Mammary epithelial cell (primary cell): ENCODE measurements at regions of chr9 and their contacts with region 1.

Region 1: GRCh38 chr9:114434878-114435311 is 47.1 kb upstream of the AKNA start:
- DNase-seq: peak; percentile 41
- H3K4me3 ChIP-seq: no peak overlapping the region
- H3K27ac ChIP-seq: no peak overlapping the region
- H3K4me1 ChIP-seq: no peaks in the 10 kb centered on the region
- H3K27me3 ChIP-seq: no peaks in the 10 kb centered on the region
- CTCF ChIP-seq: peak; percentile 80 to 84

Region 2: GRCh38 chr9:113361304-113362018 is 1073.4 kb before region 1 on chr9:
- CTCF ChIA-PET with region 1: no interaction called
- dilution Hi-C with region 1: no loop called
- in situ Hi-C with region 1: no loop called
- intact Hi-C with region 1: no loop called
- DNase-seq: no peak
- H3K4me3 ChIP-seq: no peak overlapping the region
- H3K27ac ChIP-seq: no peak overlapping the region
- H3K4me1 ChIP-seq: no peaks in the 10 kb centered on the region
- H3K27me3 ChIP-seq: no peaks in the 10 kb centered on the region
- CTCF ChIP-seq: no peak

Region 3: GRCh38 chr9:114472765-114473446 is 38.0 kb after region 1 on chr9:
- CTCF ChIA-PET with region 1: no interaction called
- dilution Hi-C with region 1: loop called (anchors 5 kb)
- in situ Hi-C with region 1: no loop called
- intact Hi-C with region 1: no loop called
- DNase-seq: peak; percentile 77
- H3K4me3 ChIP-seq: no peak overlapping the region
- H3K27ac ChIP-seq: no peak overlapping the region
- H3K4me1 ChIP-seq: peaks cover 17% of the 10 kb centered on the region
- H3K27me3 ChIP-seq: no peaks in the 10 kb centered on the region
- CTCF ChIP-seq: no peak

Region 4: GRCh38 chr9:114487607-114488300 is 52.9 kb after region 1 on chr9:
- CTCF ChIA-PET with region 1: no interaction called
- dilution Hi-C with region 1: no loop called
- in situ Hi-C with region 1: no loop called
- intact Hi-C with region 1: loop called (anchors 5 kb)
- DNase-seq: peak; percentile 66
- H3K4me3 ChIP-seq: no peak overlapping the region
- H3K27ac ChIP-seq: no peak overlapping the region
- H3K4me1 ChIP-seq: peaks cover 17% of the 10 kb centered on the region
- H3K27me3 ChIP-seq: no peaks in the 10 kb centered on the region
- CTCF ChIP-seq: peak; percentile 89 to 96

Region 5: DNA sequence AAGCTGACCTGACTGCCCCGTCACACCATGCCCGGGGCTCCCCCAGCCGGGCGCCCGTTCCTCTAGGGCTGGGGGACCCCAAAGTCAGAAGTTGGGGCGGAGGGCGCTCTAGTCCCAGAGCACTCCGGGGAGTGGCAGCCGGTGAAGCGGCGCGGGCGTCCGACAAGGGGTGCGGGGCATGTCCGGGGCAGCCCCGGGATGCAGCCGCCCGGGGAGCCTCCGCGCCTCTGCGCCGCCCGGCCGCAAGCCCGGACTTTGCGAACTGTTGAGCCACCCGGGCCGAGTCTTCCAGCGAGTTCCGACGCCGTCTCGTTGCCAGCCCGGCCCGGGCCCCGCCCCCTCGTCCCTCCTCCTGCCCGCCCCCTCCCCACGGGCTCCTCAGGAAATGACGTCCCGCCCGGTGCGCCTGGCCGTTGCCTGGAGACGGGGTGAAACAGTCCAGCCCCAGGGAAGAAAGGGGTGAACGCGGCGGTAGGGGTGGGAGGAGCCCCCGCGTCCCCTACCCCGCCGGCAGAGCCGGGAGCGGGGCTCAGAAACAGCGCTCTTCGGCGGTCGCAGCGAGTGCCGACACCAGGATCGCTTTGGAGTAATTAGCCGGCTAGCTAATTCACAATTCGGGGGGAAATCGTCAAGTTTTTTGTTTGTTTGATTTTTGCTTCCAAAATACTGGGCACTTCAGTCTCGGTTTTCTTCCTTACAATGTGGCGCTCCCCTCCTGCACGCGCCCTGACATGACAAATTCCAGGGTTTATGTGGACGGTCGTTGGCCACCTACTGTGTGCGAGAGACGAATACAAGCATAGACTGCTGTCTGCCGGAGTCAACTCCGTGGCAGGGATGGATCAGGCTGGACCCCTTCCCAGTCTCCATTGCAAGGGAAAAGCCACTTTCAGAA is 70.5 kb after region 1 on chr9 and contains the start of gene WHRN:
- CTCF ChIA-PET with region 1: no interaction called
- dilution Hi-C with region 1: no loop called
- in situ Hi-C with region 1: no loop called
- intact Hi-C with region 1: loop called (anchors 1 kb)
- DNase-seq: peak; percentile 88
- H3K4me3 ChIP-seq: peak within 1 kb of the TSS; percentile 64 to 79 (median 67)
- H3K27ac ChIP-seq: peak within 1 kb of the TSS; percentile 81
- H3K4me1 ChIP-seq: peaks cover 32% of the 10 kb centered on the region
- H3K27me3 ChIP-seq: no peaks in the 10 kb centered on the region
- CTCF ChIP-seq: no peak
- total RNA-seq, gene WHRN: 3.2 to 9.7 TPM

Region 6: DNA sequence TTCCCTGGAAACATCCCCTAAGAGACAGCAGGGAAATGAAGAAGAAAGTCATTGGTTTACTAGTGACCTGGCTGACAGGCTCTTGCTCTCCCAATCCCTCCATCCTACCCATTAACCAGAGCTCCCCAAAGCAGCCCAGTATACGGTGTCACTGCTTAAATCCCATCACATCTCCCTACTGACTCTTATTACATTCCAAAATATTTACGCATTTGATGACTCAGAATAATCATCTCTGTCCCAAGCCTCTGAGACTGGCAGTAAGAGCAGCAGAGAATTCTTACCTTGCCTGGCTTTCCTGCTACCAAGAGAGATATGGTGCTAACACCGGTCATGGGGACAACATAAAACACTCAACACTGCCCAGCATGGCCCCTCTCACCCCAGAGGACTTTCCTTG is 90.6 kb after region 1 on chr9:
- CTCF ChIA-PET with region 1: no interaction called
- dilution Hi-C with region 1: loop called (anchors 5 kb)
- in situ Hi-C with region 1: no loop called
- intact Hi-C with region 1: no loop called
- DNase-seq: peak; percentile 62
- H3K4me3 ChIP-seq: no peak overlapping the region
- H3K27ac ChIP-seq: no peak overlapping the region
- H3K4me1 ChIP-seq: no peaks in the 10 kb centered on the region
- H3K27me3 ChIP-seq: peaks cover 4% of the 10 kb centered on the region
- CTCF ChIP-seq: no peak

Region 7: GRCh38 chr9:114587385-114588202 is 152.7 kb after region 1 on chr9 and contains the start of gene ATP6V1G1:
- CTCF ChIA-PET with region 1: no interaction called
- dilution Hi-C with region 1: no loop called
- in situ Hi-C with region 1: no loop called
- intact Hi-C with region 1: loop called (anchors 2 kb)
- DNase-seq: peak; percentile 99
- H3K4me3 ChIP-seq: peak within 1 kb of the TSS; percentile 72 to 94 (median 89)
- H3K27ac ChIP-seq: peak within 1 kb of the TSS; percentile 96
- H3K4me1 ChIP-seq: peaks cover 25% of the 10 kb centered on the region
- H3K27me3 ChIP-seq: no peaks in the 10 kb centered on the region
- CTCF ChIP-seq: peak in 1 of 2 donors; percentile 24
- total RNA-seq, gene ATP6V1G1: 99.6 to 130 TPM

Region 8: DNA sequence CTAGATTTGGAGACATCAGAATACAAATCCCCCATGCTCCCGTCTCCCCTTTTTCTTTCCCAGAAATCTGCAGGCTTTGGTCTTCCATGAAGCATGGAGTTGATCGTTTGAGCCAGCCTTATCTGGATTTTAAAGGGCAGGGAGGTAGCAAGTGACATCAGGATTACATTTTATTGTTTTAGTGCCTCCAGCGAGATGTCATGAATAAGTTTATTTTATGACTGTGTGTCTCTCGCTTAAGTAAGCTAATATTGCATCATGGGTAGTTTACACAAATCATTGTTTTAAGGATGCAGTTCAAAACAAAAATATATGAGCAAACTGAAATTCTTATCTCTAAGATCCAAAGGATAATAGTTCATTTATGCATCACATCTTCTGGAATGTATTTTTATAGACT is 546.2 kb after region 1 on chr9:
- CTCF ChIA-PET with region 1: no interaction called
- dilution Hi-C with region 1: no loop called
- in situ Hi-C with region 1: no loop called
- intact Hi-C with region 1: no loop called
- DNase-seq: no peak
- H3K4me3 ChIP-seq: no peak overlapping the region
- H3K27ac ChIP-seq: no peak overlapping the region
- H3K4me1 ChIP-seq: no peaks in the 10 kb centered on the region
- H3K27me3 ChIP-seq: peaks cover 4% of the 10 kb centered on the region
- CTCF ChIP-seq: no peak

Region 9: DNA sequence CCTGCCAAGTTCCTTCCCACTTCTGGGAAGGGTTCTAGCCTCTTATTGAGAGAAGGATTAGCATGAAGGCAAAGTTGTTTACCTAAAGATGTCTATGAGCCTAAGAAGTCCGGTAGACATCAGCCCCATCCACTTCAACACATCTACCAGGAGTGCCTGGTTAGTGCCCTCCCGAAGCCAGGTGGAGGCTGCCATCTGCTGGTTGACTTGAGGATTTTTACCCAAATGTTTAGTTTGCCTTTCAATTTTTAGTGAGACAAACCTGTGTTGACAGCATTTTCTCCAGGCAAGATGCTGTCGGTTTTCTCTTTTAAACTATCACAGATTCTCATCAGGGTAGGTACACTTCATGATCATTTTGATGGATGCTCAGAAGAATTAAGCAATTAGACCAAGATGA is 579.1 kb after region 1 on chr9:
- CTCF ChIA-PET with region 1: no interaction called
- dilution Hi-C with region 1: no loop called
- in situ Hi-C with region 1: loop called in 1 of 2 experiments (anchors 10 kb)
- intact Hi-C with region 1: loop called (anchors 1 kb)
- DNase-seq: peak; percentile 57
- H3K4me3 ChIP-seq: no peak overlapping the region
- H3K27ac ChIP-seq: no peak overlapping the region
- H3K4me1 ChIP-seq: peaks cover under 1% of the 10 kb centered on the region
- H3K27me3 ChIP-seq: no peaks in the 10 kb centered on the region
- CTCF ChIP-seq: peak; percentile 74 to 83